ENCODE measurements at regions of chr14 and their contacts with region 1.

Region 1: DNA sequence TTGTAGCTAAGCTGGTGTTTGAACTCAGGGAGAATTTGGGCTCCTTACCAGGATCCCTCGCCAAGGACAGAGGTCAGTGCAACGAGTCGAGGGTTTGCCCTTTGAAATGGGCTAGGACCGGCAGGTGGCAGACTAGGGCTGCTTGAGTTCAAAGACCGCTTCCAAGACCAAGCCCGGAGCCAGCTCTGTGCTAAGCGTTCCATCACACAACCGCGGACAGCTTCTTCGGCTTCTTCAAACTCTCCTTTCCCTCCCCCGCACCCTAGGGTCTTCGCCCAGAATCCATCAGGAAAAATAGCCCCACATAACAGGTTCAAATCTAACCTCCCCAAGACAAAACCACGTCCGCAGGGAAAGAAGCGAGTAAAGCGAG is 705 bp upstream of the FLVCR2 start:
- DNase-seq: peak; percentile 78
- H3K4me3 Mint-ChIP-seq: peak overlapping the region; percentile 82
- H3K27ac Mint-ChIP-seq: peak overlapping the region; percentile 66
- H3K4me1 Mint-ChIP-seq: peaks cover 21% of the 10 kb centered on the region
- H3K27me3 Mint-ChIP-seq: peaks cover 4% of the 10 kb centered on the region

Region 2: DNA sequence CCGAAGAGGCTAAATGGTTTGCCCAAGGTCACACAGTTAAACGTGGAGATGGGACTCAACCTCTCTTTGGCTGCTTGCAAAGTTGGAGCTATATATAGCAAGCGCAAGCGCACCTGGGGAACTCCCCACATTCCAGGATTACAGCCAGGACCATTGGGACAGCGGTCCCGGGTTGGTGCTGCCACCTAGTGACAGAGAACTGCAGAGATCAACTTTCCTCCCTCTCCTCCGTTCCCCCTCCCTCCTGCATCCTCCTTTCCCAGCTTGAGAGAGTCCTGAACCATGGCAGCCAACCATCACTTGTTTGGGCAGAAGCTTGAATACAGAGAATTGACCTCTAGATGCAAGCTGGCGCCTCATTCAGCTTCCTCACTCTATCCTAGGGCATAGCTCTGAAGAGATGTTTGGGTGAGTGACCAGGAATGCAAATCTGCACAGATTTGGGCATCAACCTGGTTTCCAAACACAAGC is 16.7 kb before region 1 on chr14:
- CTCF ChIA-PET with region 1: interaction called, 12 read pairs
- POLR2A ChIA-PET with region 1: no interaction called
- DNase-seq: peak; percentile 45
- H3K4me3 Mint-ChIP-seq: peak overlapping the region; percentile 2
- H3K27ac Mint-ChIP-seq: no peak overlapping the region
- H3K4me1 Mint-ChIP-seq: peaks cover 62% of the 10 kb centered on the region
- H3K27me3 Mint-ChIP-seq: no peaks in the 10 kb centered on the region

Region 3: DNA sequence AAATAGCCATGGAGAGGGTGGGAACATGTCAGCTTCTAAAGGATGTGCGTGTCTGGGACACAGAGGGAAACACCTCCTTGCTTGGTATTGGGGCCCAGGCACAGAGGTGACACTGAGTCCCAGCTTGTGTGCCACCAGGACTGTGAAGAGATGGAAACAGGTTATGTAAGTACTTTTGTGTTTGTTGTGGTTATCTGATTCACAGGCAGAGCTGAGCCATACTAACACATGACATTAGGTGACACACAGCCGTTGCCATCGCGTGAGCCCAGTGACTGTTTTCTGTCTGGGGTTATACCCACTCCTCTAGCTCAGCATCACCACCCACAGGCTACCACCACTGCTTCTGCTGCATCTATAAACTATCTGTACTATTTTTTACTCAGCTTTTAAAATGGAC is 11.4 kb before region 1 on chr14:
- CTCF ChIA-PET with region 1: interaction called, 13 read pairs
- POLR2A ChIA-PET with region 1: no interaction called
- DNase-seq: peak; percentile 83
- H3K4me3 Mint-ChIP-seq: peak overlapping the region; percentile 28
- H3K27ac Mint-ChIP-seq: peak overlapping the region; percentile 82
- H3K4me1 Mint-ChIP-seq: peaks cover 62% of the 10 kb centered on the region
- H3K27me3 Mint-ChIP-seq: no peaks in the 10 kb centered on the region

Region 4: DNA sequence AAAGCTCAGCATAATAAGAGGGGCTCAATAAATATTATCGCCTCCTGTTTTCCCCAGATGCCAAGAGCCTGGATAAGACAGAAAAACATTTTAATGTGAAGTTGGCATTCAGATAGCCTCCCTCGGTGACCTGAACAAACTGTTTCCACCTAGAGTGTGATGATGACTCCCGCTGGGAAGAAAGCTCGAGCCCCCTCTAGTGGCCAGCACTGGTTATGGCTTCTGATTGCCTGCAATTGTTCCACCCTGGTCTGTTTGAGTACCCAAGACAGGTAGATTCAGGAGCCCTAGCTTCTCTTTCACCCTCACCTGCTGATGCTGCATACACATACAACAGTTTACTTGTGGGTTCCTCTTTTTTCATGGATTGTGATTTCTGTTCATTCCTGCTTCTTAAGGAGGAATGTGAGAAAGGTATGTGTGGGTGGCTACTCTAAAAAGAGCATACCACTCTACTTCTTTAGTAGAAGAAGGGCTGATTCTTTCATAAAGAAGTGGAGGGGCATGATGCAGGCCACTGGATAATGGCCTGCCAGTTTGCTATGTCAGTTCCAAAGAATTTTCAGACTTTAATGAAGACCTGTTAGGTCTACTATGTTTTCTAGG is 76.5 kb after region 1 on chr14:
- CTCF ChIA-PET with region 1: interaction called, 42 read pairs
- POLR2A ChIA-PET with region 1: no interaction called
- DNase-seq: peak; percentile 85
- H3K4me3 Mint-ChIP-seq: no peak overlapping the region
- H3K27ac Mint-ChIP-seq: no peak overlapping the region
- H3K4me1 Mint-ChIP-seq: peaks cover 18% of the 10 kb centered on the region
- H3K27me3 Mint-ChIP-seq: no peaks in the 10 kb centered on the region